Caco-2 (cell line): ENCODE measurements at regions of chr7 and their contacts with region 1.

Region 1: DNA sequence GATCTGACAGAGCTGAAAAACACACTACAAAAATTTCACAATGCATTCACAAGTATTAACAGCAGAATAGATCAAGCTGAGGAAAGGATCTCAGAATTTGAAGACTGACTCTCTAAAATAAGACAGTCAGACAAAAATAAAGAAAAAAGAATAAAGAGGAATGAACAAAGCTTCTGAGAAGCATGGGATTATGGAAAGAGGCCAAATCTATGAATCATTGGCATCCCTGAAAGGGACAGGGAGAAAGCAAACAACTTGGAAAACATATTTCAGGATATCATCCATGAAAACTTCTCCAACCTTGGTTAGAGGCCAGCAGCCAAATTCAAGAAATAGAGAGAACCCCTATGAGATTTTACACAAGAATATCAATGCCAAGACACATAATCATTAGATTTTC is 804.8 kb upstream of the IGFBP3 start:
- DNase-seq: no peak
- H3K4me3 ChIP-seq: no peak overlapping the region
- H3K4me3 Mint-ChIP-seq: no peak overlapping the region
- H3K27ac Mint-ChIP-seq: no peak overlapping the region
- H3K4me1 ChIP-seq: no peaks in the 10 kb centered on the region
- H3K4me1 Mint-ChIP-seq: no peaks in the 10 kb centered on the region
- H3K27me3 ChIP-seq: no peaks in the 10 kb centered on the region
- H3K27me3 Mint-ChIP-seq: no peaks in the 10 kb centered on the region
- CTCF ChIP-seq: no peak

Region 2: DNA sequence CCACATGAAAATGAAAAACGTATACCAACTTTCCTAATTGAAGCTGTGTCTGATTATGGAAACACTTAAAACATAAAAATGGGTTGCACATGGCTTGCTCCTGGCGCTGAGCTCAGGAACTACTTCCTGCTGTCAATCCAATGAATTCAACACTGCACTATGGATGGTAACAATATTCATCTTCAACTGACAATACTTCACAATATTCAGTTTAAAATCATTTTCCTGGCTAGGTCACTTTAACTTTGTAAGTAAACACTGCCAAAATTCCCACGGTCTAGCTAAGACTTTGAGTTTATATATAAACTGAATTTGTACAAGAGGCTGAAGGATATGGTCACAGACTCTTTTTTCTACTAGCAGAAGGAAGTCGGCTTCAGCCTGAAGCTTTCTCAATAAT is 299.2 kb after region 1 on chr7:
- CTCF ChIA-PET with region 1: no interaction called
- POLR2A ChIA-PET with region 1: no interaction called
- intact Hi-C with region 1: loop called (anchors 5 kb)
- DNase-seq: no peak
- H3K4me3 ChIP-seq: no peak overlapping the region
- H3K4me3 Mint-ChIP-seq: no peak overlapping the region
- H3K27ac Mint-ChIP-seq: no peak overlapping the region
- H3K4me1 ChIP-seq: no peaks in the 10 kb centered on the region
- H3K4me1 Mint-ChIP-seq: no peaks in the 10 kb centered on the region
- H3K27me3 ChIP-seq: no peaks in the 10 kb centered on the region; the same call in 1 of the 2 replicates
- H3K27me3 Mint-ChIP-seq: peaks cover 5% of the 10 kb centered on the region
- CTCF ChIP-seq: no peak